CD8-positive, alpha-beta T cell (primary cell): ENCODE measurements at regions of chr13 and their contacts with region 1.

Region 1: DNA sequence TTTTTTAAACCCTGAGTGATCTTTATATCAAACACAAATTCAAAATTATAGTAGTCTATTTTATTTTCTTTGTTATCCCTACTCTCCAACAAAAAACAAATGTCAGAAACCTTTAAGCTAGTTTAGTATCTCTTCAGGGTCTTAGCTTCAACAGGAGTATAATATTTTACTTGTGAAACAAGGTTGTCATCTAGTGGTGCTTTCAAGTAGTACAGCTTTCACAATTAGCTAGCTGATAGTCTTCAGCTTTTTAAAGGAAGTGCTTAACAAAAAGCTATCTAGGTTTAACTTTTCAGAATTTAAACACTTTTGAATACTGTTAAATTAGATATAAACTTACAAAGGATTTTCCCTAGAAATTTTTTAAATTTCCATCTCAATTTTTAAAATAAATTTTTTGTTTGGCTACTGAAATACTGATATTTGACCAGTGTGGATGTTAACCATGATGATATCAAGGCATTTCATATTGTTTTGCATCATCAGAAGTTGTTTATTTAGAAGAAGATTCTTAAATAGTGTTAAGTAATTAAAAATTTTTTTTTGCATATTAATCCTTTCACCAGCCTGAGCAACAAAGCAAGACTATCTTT is 34.2 kb downstream of the TDRD3 start:
- DNase-seq: peak in 2 of 9 experiments; percentile 67 to 76
- ATAC-seq: peak; percentile 84
- H3K4me3 ChIP-seq: no peak overlapping the region
- H3K4me3 Mint-ChIP-seq: no peak overlapping the region
- H3K27ac ChIP-seq: no peak overlapping the region
- H3K27ac Mint-ChIP-seq: no peak overlapping the region
- H3K4me1 ChIP-seq: peaks cover 5% of the 10 kb centered on the region
- H3K4me1 Mint-ChIP-seq: peaks cover 34% of the 10 kb centered on the region
- H3K27me3 ChIP-seq: no peaks in the 10 kb centered on the region
- H3K27me3 Mint-ChIP-seq: no peaks in the 10 kb centered on the region
- CTCF ChIP-seq: peak; percentile 100

Region 2: DNA sequence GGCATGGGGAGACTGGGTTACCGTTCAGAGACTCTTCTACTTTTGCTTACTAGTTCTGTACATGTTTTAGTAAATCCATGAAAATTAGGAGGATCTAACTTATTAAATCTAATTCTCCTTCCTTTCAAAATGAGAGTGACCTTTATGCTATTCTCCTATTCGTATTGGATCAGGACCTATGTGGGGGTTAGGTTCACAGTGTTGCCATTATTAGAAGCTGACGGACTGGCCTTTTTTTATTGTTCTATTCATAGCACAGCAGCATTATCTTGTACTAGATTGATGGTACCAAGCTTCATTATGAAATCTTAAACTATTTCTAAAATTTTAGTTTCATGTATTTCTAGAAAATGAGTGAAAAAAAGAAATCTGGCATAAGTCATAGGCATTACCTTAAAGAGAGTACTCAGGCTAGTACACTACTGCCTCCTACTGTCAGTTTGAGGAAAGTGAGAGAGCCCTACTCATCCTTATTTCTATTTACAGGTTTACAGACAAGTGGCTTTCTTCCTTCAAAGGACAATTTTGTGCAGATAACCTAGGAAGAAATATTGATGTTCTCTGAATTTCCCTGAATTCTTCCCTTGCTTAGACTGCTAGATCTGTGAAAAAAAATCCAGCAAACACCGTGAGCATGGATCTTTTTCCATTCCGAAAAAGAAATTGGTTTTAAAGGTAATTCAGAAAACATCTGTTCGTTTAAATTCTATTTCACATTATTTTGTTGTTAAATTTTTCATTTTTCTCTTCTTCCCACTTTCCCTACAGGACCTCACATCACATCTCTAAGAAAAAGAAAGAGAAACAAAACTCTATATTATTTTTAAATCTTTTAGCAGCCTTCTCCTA is 753.0 kb before region 1 on chr13:
- CTCF ChIA-PET with region 1: interaction called, 7 read pairs
- POLR2A ChIA-PET with region 1: no interaction called
- intact Hi-C with region 1: loop called (anchors 1 kb)
- DNase-seq: peak in 2 of 9 experiments; percentile 39 to 53
- ATAC-seq: peak; percentile 66
- H3K4me3 ChIP-seq: no peak overlapping the region
- H3K4me3 Mint-ChIP-seq: no peak overlapping the region
- H3K27ac ChIP-seq: no peak overlapping the region
- H3K27ac Mint-ChIP-seq: no peak overlapping the region
- H3K4me1 ChIP-seq: no peaks in the 10 kb centered on the region
- H3K4me1 Mint-ChIP-seq: peaks cover 5% of the 10 kb centered on the region
- H3K27me3 ChIP-seq: no peaks in the 10 kb centered on the region
- H3K27me3 Mint-ChIP-seq: no peaks in the 10 kb centered on the region
- CTCF ChIP-seq: peak; percentile 57

Region 3: DNA sequence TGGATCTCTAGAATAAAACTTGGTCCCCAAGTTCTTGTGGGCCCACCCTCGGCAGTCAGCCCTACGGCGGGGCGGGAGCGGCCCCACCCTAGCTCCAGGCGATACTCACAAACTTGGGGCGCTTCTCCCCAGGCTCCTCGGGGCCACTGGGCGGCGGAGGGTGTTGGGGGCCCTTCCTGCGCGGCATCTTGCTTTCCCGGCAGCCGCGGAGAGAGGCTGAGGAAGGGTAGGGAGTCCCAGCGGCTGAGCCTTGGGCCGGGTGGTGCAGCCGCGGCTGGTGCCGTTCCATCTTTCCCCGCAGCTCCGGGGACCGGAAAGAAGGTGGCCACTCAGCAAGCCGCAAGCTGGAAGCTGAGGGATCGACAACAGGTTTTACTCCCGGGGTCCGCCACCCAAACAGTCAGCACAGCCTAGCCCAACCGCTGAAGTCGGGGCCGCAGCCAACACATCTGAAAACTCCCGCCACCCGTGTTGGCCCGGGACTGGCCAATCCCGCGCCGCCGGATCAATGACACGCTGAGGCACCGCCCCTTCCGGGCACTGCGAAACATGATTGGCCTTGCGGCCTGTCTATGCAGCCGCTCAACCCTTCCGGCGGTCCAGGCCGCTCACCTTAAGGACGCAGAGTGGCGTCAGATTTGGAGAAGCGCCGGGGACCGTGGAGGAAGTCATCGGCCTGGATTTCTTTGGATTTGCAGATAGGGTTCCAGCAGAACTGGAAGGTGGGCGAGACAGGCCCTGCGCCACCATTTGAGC is 267.5 kb before region 1 on chr13 and contains the start of gene DIAPH3:
- CTCF ChIA-PET with region 1: no interaction called
- POLR2A ChIA-PET with region 1: no interaction called
- intact Hi-C with region 1: loop called in 1 of 2 experiments (anchors 10 kb)
- DNase-seq: peak; percentile 84 to 94 (median 92)
- ATAC-seq: peak; percentile 99
- H3K4me3 ChIP-seq: peak within 1 kb of the TSS; percentile 77 to 95
- H3K4me3 Mint-ChIP-seq: peak within 1 kb of the TSS; percentile 95
- H3K27ac ChIP-seq: peak within 1 kb of the TSS; percentile 70 to 89
- H3K27ac Mint-ChIP-seq: peak within 1 kb of the TSS; percentile 95
- H3K4me1 ChIP-seq: peaks cover 16% of the 10 kb centered on the region
- H3K4me1 Mint-ChIP-seq: peaks cover 24% of the 10 kb centered on the region
- H3K27me3 ChIP-seq: no peaks in the 10 kb centered on the region
- H3K27me3 Mint-ChIP-seq: peaks cover 9% of the 10 kb centered on the region
- CTCF ChIP-seq: no peak
- total RNA-seq, gene DIAPH3: 0.06 to 0.11 TPM

Region 4: DNA sequence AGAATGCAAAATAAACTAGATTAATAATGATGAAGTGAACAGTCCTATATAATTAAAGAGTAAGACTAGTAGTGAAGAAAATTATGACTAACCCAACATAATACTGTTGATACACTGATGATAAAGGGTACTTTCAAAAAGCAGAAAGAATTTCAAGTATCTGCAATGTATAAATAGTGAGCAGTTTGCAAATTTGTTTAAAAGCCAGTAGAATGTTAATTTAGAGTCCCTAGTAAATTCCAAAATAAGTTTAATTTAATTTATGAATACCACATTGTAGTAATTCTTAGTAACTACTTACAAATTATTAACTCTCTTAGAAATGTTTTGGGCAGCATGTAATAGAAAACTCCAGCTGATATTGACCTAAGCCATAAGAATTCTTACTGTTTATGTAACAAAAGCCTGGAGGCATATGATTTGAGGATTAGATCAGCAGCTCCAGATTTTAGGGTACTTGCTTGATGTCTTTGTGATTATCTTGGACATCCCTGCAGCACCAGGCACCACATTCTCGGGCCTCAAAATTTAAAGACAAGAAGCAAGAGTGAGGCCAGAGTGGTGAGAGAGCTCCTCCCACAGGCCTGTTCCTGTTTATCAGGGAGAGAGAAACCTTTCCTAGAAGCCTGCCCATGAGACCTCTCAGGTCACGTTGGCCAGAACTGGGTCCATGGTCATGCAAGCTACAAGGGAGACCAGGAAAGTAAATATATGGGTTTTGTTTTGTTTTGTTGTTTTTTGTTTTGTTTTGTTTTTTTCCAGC is 101.8 kb before region 1 on chr13:
- CTCF ChIA-PET with region 1: interaction called, 4 read pairs
- POLR2A ChIA-PET with region 1: no interaction called
- intact Hi-C with region 1: loop called in 1 of 2 experiments (anchors 2 kb)
- DNase-seq: peak in 3 of 9 experiments; percentile 16 to 26 (median 18)
- ATAC-seq: no peak
- H3K4me3 ChIP-seq: no peak overlapping the region
- H3K4me3 Mint-ChIP-seq: no peak overlapping the region
- H3K27ac ChIP-seq: no peak overlapping the region
- H3K27ac Mint-ChIP-seq: no peak overlapping the region
- H3K4me1 ChIP-seq: no peaks in the 10 kb centered on the region
- H3K4me1 Mint-ChIP-seq: no peaks in the 10 kb centered on the region
- H3K27me3 ChIP-seq: no peaks in the 10 kb centered on the region
- H3K27me3 Mint-ChIP-seq: peaks cover 3% of the 10 kb centered on the region
- CTCF ChIP-seq: no peak

Region 5: GRCh38 chr13:60335531-60335930 is 95.7 kb before region 1 on chr13:
- CTCF ChIA-PET with region 1: no interaction called
- POLR2A ChIA-PET with region 1: no interaction called
- intact Hi-C with region 1: loop called in 1 of 2 experiments (anchors 5 kb)
- DNase-seq: peak in 1 of 9 experiments; percentile 5
- ATAC-seq: no peak
- H3K4me3 ChIP-seq: no peak overlapping the region
- H3K4me3 Mint-ChIP-seq: no peak overlapping the region
- H3K27ac ChIP-seq: no peak overlapping the region
- H3K27ac Mint-ChIP-seq: no peak overlapping the region
- H3K4me1 ChIP-seq: no peaks in the 10 kb centered on the region
- H3K4me1 Mint-ChIP-seq: no peaks in the 10 kb centered on the region
- H3K27me3 ChIP-seq: no peaks in the 10 kb centered on the region
- H3K27me3 Mint-ChIP-seq: peaks cover 3% of the 10 kb centered on the region
- CTCF ChIP-seq: peak; percentile 68

Region 6: GRCh38 chr13:60379837-60380236 is 51.4 kb before region 1 on chr13:
- CTCF ChIA-PET with region 1: no interaction called
- POLR2A ChIA-PET with region 1: no interaction called
- intact Hi-C with region 1: loop called in 1 of 2 experiments (anchors 1 kb)
- DNase-seq: no peak
- ATAC-seq: no peak
- H3K4me3 ChIP-seq: no peak overlapping the region
- H3K4me3 Mint-ChIP-seq: no peak overlapping the region
- H3K27ac ChIP-seq: no peak overlapping the region
- H3K27ac Mint-ChIP-seq: no peak overlapping the region
- H3K4me1 ChIP-seq: no peaks in the 10 kb centered on the region
- H3K4me1 Mint-ChIP-seq: no peaks in the 10 kb centered on the region
- H3K27me3 ChIP-seq: no peaks in the 10 kb centered on the region
- H3K27me3 Mint-ChIP-seq: peaks cover 10% of the 10 kb centered on the region
- CTCF ChIP-seq: no peak

Region 7: DNA sequence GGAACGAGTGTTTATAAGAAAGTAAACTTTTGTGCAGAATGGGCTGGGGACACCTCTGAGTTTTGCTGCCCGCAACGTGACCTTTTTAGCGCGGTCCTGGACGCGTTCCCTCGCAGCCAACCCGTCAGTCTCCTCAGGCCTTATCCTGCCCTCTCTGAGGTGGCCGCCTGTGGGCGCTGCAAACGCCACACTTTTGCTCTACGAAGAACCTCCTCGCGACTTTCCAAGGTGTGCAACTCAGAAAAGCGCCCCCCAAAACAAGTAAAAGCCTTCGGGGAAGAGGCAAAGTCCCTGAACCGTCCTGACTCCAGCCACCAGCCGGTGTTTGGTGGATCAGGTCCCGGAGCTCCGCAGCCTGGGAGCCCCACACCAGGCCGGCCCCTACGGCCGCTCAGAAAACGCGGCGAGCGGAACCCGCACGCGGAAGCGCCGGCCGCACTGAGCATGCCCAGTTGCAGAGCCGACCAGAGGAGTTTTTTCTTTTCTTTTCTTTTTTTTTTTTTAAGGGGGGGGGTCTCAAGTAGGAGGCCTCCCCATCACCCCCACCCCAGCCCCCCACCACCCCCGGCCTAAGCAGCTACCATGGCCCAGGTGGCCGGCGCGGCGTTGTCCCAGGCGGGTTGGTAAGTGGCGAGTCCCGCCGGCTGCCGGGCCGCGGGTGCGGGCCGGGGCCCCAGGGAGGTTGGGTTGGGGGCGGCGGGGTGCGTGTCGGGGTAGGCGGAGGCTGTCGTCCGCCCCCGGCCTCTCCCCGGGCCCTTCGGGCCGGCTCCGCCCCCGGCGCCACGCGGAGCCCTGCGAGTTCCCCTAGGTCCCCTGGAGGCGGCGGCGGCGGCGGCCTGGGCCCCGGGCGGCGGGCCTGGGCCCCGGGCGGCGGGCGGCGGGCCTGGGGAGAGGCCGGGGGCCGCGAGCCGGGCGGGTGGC is 34.2 kb before region 1 on chr13 and contains the start of gene TDRD3:
- CTCF ChIA-PET with region 1: interaction called, 5 read pairs
- POLR2A ChIA-PET with region 1: no interaction called
- intact Hi-C with region 1: loop called (anchors 1 to 2 kb)
- DNase-seq: peak; percentile 55 to 92 (median 79)
- ATAC-seq: peak; percentile 70
- H3K4me3 ChIP-seq: peak within 1 kb of the TSS; percentile 83 to 88
- H3K4me3 Mint-ChIP-seq: peak within 1 kb of the TSS; percentile 94
- H3K27ac ChIP-seq: peak within 1 kb of the TSS; percentile 82 to 83
- H3K27ac Mint-ChIP-seq: peak within 1 kb of the TSS; percentile 96
- H3K4me1 ChIP-seq: peaks cover 24% of the 10 kb centered on the region
- H3K4me1 Mint-ChIP-seq: peaks cover 42% of the 10 kb centered on the region
- H3K27me3 ChIP-seq: no peaks in the 10 kb centered on the region
- H3K27me3 Mint-ChIP-seq: no peaks in the 10 kb centered on the region
- CTCF ChIP-seq: peak; percentile 63
- total RNA-seq, gene TDRD3: 22.1 to 22.4 TPM